ENCODE measurements at regions of chr17 and their contacts with region 1.

Region 1: GRCh38 chr17:53950207-53950857 is 127.6 kb downstream of the KIF2B start:
- DNase-seq: peak; percentile 47 to 55
- H3K4me3 ChIP-seq: no peak overlapping the region
- H3K4me3 Mint-ChIP-seq: no peak overlapping the region
- H3K27ac Mint-ChIP-seq: no peak overlapping the region
- H3K4me1 ChIP-seq: no peaks in the 10 kb centered on the region
- H3K4me1 Mint-ChIP-seq: no peaks in the 10 kb centered on the region
- H3K27me3 ChIP-seq: no peaks in the 10 kb centered on the region
- H3K27me3 Mint-ChIP-seq: no peaks in the 10 kb centered on the region
- CTCF ChIP-seq: peak; percentile 59 to 67

Region 2: DNA sequence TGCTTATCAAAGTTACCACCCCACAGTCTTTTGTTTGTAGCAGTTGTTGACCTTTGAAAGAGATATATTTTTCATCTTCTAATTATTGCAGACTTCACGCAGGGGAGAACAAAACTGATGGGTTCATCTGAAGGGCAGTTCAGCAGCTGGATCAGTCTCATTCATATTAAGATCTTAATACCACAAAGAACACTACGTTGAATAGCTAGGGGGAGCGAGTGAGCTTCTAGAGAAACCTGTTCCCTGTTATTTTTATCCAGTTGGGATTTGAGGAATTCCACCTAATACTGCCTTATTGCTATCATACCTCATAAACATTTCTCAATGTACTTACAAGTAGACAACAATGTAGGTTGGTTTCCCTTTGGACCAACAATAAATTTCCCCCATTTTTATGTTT is 433.7 kb before region 1 on chr17:
- CTCF ChIA-PET with region 1: no interaction called
- POLR2A ChIA-PET with region 1: no interaction called
- intact Hi-C with region 1: loop called (anchors 1 kb)
- DNase-seq: peak in 1 of 2 experiments; percentile 8
- H3K4me3 ChIP-seq: no peak overlapping the region
- H3K4me3 Mint-ChIP-seq: no peak overlapping the region
- H3K27ac Mint-ChIP-seq: no peak overlapping the region
- H3K4me1 ChIP-seq: no peaks in the 10 kb centered on the region
- H3K4me1 Mint-ChIP-seq: no peaks in the 10 kb centered on the region
- H3K27me3 ChIP-seq: no peaks in the 10 kb centered on the region
- H3K27me3 Mint-ChIP-seq: peaks cover 4% of the 10 kb centered on the region
- CTCF ChIP-seq: peak in 1 of 2 experiments; percentile 8

Region 3: DNA sequence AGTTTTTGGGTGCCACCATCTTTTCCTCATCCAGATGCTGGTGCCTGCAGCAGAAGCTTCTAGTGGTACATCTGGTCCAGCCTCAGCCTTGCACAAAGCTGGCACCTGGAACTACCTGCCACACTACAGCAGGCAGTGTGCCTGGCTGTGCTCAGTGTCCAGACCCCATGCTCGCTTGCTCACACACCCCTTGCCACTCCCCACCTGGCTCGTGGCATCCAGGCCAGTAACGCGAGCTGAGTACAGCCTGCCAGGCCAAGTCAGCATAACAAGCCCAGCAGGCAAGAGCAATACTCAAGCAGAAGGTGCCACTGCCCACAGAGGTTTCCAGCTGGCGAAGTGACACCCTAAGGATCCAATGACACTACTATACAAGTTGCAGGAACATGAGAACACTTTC is 157.3 kb before region 1 on chr17:
- CTCF ChIA-PET with region 1: no interaction called
- POLR2A ChIA-PET with region 1: no interaction called
- intact Hi-C with region 1: loop called (anchors 5 kb)
- DNase-seq: no peak
- H3K4me3 ChIP-seq: no peak overlapping the region
- H3K4me3 Mint-ChIP-seq: no peak overlapping the region
- H3K27ac Mint-ChIP-seq: no peak overlapping the region
- H3K4me1 ChIP-seq: no peaks in the 10 kb centered on the region
- H3K4me1 Mint-ChIP-seq: no peaks in the 10 kb centered on the region
- H3K27me3 ChIP-seq: no peaks in the 10 kb centered on the region
- H3K27me3 Mint-ChIP-seq: peaks cover 2% of the 10 kb centered on the region
- CTCF ChIP-seq: no peak

Region 4: DNA sequence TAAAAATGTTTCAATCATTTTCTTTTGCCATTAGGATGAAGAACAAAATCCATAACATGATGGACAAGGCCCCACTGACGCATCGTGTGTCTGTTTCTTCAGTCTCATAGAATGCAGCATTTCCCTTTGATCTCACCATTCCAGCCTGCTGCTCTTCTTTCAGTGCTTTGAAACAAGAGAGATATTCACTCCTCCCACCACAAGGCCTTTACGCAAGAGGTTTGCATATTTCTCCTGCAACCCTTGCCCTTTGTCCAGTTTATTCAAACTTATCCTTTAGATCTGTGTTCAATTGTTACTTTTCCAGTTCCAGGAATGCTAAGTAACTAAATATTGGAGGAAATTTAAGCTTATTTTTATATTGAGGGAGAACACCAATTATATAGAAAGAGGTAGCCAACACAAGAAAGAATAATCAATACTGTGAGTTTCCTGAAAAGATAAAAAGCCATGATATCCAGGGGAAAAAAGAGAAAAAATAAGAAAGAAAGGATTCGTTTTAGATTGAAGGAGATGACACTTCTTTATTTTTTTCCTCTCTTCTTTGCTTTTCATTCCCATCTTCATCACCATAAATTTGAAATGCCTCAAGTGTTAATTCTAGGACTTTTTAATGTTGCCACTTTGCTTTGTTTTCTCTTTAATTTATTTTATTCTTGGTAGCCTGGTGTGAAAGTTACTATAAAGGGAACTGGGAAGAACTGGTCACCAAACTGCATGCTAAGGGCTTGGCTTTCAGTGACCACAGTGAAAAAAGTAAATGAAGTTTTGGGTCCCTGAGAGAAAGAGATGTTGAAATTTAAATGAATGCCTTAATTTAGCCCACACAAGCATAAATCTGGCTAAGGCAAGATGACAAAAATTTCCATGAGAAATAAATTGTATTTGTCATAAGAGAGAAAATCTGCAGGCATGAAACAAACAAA is 25.5 kb before region 1 on chr17:
- CTCF ChIA-PET with region 1: no interaction called
- POLR2A ChIA-PET with region 1: no interaction called
- intact Hi-C with region 1: loop called (anchors 1 kb)
- DNase-seq: peak; percentile 81 to 83
- H3K4me3 ChIP-seq: no peak overlapping the region
- H3K4me3 Mint-ChIP-seq: peak overlapping the region; percentile 39
- H3K27ac Mint-ChIP-seq: peak overlapping the region; percentile 85
- H3K4me1 ChIP-seq: peaks cover 30% of the 10 kb centered on the region
- H3K4me1 Mint-ChIP-seq: peaks cover 28% of the 10 kb centered on the region
- H3K27me3 ChIP-seq: no peaks in the 10 kb centered on the region
- H3K27me3 Mint-ChIP-seq: no peaks in the 10 kb centered on the region
- CTCF ChIP-seq: no peak